Activated B cell treated with CpG ODN at 0.5 μM for 24 hours (primary cell): ENCODE measurements at regions of chr2 and their contacts with region 1.

Region 1: DNA sequence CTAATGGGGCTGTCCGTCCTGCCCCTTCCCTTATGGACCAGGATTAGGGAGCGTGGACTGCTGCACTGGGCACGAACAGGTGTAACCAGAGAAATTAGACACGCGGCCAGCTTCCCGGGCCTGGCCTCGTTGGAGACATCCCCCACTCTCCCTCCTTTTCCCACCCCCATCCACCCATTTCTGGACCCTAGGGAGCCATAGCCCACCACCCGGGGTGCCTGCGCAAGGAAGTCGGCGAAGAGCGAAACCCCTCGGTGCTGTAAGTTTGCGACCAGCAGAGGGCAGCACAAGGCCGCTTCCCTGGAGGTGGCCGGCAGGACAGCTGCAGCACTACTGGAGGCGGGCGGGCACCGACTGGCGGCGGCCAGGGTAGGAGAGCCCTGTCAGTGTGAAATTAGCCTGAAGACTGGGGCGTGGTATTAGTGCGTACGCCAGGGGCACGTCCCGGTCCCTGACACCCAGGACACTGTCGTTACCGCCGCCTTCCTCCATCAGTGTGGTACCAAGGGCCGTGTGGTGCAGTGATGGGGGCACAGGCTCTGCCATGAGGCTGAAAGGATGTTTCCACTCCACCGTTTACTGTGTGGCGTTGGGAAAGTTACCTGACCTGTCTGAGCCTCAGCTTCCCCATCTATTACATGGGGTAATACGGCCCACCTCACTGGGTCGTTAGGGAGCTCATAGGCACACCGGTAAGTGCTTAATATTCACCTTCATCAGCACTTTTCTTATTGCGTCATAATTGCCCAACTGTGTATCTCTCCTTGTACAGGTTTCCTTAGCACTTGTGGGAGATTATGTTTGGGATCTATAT is 36.0 kb upstream of the CD207 start:
- DNase-seq: peak; percentile 61
- ATAC-seq: peak; percentile 78
- H3K4me3 Mint-ChIP-seq: no peak overlapping the region
- H3K27ac Mint-ChIP-seq: no peak overlapping the region
- H3K4me1 Mint-ChIP-seq: peaks cover 6% of the 10 kb centered on the region
- H3K27me3 Mint-ChIP-seq: peaks cover 51% of the 10 kb centered on the region
- CTCF ChIP-seq: no peak

Region 2: DNA sequence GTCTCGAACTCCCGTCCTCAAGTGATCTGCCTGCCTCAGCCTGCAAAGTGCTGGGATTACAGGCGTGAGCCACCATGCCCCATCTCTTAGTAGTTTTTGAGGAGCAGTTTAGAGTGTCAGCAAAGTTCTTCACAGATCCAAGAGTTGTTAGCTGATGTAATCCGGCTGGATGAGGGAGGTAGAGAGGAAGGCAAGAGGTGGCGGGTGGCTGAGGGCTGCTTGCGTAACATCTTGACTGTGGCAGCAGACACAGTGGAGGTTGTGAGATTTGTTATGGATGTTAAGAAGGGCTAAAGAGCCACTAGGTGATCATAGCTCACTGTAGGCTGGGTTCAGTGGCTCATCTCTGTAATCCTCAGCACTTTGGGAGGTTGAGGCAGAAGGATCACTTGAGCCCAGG is 550.2 kb before region 1 on chr2:
- CTCF ChIA-PET with region 1: no interaction called
- POLR2A ChIA-PET with region 1: no interaction called
- intact Hi-C with region 1: no loop called
- DNase-seq: no peak
- ATAC-seq: no peak
- H3K4me3 Mint-ChIP-seq: no peak overlapping the region
- H3K27ac Mint-ChIP-seq: no peak overlapping the region
- H3K4me1 Mint-ChIP-seq: no peaks in the 10 kb centered on the region
- H3K27me3 Mint-ChIP-seq: peaks cover 31% of the 10 kb centered on the region
- CTCF ChIP-seq: no peak

Region 3: DNA sequence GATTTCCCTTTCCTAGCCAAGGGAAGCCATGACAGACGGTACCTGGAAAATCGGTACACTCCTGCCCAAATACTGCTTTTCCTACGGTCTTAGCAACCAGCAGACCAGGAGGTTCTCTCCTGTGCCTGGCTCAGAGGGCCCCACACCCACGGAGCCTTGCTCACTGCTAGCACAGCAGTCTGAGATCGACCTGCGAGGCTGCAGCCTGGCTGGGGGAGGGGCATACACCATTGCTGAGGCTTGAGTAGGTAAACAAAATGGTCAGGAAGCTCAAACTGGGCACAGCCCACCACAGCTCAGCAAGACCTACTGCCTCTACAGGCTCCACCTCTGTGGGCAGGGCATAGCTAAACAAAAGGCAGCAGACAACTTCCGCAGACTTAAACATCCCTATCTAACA is 29.2 kb before region 1 on chr2:
- CTCF ChIA-PET with region 1: no interaction called
- POLR2A ChIA-PET with region 1: no interaction called
- intact Hi-C with region 1: no loop called
- DNase-seq: no peak
- ATAC-seq: no peak
- H3K4me3 Mint-ChIP-seq: no peak overlapping the region
- H3K27ac Mint-ChIP-seq: no peak overlapping the region
- H3K4me1 Mint-ChIP-seq: no peaks in the 10 kb centered on the region
- H3K27me3 Mint-ChIP-seq: peaks cover 23% of the 10 kb centered on the region
- CTCF ChIP-seq: no peak

Region 4: DNA sequence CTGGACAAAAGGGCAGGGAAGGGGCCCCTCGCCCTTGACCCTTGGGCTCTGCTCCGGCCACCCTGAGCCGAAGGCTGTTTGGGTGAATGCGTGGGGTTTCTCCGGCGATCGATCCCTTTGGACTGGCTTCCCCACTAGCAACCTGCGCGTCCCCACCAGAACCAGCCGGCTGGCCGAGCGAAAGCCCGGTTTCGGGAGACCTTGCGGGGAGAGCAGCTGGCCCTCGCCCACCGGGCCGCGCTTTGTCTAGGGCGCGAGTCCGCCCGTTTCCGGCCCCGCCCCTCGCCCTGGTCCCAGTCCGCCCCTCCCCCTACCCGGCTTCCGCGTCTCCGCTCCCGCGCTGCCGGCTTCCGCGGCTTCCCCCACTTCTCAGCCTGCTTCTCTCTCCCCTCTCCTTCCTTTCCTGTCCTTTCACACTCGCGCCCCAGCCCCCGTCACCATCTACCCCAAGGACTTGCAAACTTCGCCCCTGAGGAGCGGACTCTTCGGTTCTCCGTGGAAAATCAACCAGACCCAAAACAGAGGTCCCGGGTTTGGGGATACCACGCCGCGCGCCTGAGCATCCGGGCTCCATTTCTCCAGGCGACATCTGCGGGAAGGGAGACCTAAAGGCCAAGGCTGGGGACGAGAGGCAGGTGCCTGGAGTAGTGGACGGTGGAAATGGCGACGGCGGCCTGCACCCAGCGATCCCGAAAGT is 16.1 kb after region 1 on chr2:
- CTCF ChIA-PET with region 1: no interaction called
- POLR2A ChIA-PET with region 1: no interaction called
- intact Hi-C with region 1: no loop called
- DNase-seq: no peak
- ATAC-seq: no peak
- H3K4me3 Mint-ChIP-seq: peak overlapping the region; percentile 76
- H3K27ac Mint-ChIP-seq: no peak overlapping the region
- H3K4me1 Mint-ChIP-seq: peaks cover 27% of the 10 kb centered on the region
- H3K27me3 Mint-ChIP-seq: peaks cover 67% of the 10 kb centered on the region
- CTCF ChIP-seq: no peak

Region 5: DNA sequence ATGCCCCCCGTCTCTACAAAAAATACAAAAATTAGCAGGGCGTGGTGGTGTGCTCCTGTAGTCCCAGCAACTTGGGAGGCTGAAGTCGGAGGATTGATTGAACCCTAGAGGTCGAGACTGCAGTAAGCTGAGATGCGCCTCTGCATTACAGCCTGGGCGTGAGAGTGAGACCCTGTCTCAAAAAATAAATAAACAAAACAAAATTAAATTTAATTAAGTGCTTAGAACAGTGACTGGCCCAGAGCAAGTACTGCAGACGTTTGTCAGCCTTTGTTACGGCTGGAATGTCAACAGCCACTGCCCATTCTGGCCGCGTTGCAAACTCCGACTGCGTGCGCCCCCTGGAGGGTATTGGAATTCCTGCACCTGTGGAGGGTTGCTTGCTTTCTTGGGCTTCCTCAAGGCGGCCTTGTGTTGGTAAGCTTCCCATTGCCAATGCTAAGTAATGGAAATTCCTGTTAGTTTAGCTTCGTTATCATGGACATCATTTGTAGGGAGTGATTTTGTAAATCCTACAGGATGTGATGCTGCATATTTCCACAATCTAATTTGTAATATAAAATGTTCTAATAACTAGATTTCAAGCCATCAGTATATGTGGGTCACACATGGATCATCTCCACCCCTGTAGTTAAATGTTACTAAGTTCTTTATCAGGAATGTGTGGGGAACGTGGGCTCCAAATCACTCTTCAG is 48.2 kb after region 1 on chr2:
- CTCF ChIA-PET with region 1: interaction called, 5 read pairs
- POLR2A ChIA-PET with region 1: no interaction called
- intact Hi-C with region 1: loop called (anchors 1 kb)
- DNase-seq: no peak
- ATAC-seq: peak; percentile 52
- H3K4me3 Mint-ChIP-seq: no peak overlapping the region
- H3K27ac Mint-ChIP-seq: no peak overlapping the region
- H3K4me1 Mint-ChIP-seq: no peaks in the 10 kb centered on the region
- H3K27me3 Mint-ChIP-seq: peaks cover 37% of the 10 kb centered on the region
- CTCF ChIP-seq: no peak

Region 6: GRCh38 chr2:70948337-70949003 is 76.9 kb after region 1 on chr2:
- CTCF ChIA-PET with region 1: interaction called, 62 read pairs
- POLR2A ChIA-PET with region 1: no interaction called
- intact Hi-C with region 1: loop called (anchors 1 kb)
- DNase-seq: peak; percentile 66
- ATAC-seq: peak; percentile 99
- H3K4me3 Mint-ChIP-seq: peak overlapping the region; percentile 77
- H3K27ac Mint-ChIP-seq: peak overlapping the region; percentile 4
- H3K4me1 Mint-ChIP-seq: peaks cover 12% of the 10 kb centered on the region
- H3K27me3 Mint-ChIP-seq: peaks cover 20% of the 10 kb centered on the region
- CTCF ChIP-seq: peak; percentile 73

Region 7: GRCh38 chr2:70977605-70978205 is 106.1 kb after region 1 on chr2:
- CTCF ChIA-PET with region 1: interaction called, 3 read pairs
- POLR2A ChIA-PET with region 1: no interaction called
- intact Hi-C with region 1: loop called (anchors 1 kb)
- DNase-seq: no peak
- ATAC-seq: peak; percentile 35
- H3K4me3 Mint-ChIP-seq: peak overlapping the region; percentile 92
- H3K27ac Mint-ChIP-seq: peak overlapping the region; percentile 87
- H3K4me1 Mint-ChIP-seq: peaks cover 16% of the 10 kb centered on the region
- H3K27me3 Mint-ChIP-seq: peaks cover 4% of the 10 kb centered on the region
- CTCF ChIP-seq: no peak

Region 8: DNA sequence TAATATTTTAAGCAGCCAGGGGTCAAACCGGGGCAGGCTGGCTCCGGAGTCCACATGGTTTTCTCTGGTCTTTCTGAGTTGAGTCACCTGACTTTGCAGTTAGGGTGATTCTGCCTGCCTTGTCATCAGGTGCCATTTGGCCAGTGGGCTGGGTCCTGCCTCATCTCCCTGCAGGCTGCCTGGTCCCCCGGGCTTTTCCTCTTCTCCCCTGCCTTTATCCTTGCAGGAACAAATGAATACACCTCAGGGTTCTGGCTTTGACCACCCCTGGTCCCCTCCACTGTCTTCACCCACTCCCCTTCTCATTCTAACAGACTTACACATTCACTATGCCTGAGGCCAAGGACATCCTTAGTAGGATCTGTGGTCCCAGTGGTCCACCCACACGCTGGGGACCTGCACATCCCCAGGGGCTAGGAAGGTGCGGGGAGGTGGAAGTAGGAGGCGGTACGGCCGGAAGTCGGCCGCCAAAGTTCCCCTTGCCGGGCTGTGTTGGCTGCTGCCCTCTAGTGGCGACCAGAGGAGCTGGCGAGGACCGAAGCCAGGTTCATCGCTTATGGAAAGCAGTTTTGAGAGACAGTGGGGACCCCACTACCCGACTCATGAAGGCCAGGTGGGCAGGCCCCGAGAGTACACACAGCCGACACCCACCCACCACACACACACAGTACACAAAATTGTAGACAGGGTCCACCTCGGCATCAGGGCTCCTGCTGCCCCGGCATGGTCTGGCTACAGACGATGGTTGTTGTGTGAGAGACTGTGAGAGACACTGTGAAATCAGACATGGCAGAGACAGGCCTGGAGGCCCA is 129.4 kb after region 1 on chr2:
- CTCF ChIA-PET with region 1: interaction called, 7 read pairs
- POLR2A ChIA-PET with region 1: no interaction called
- intact Hi-C with region 1: loop called (anchors 5 kb)
- DNase-seq: peak; percentile 71
- ATAC-seq: peak; percentile 98
- H3K4me3 Mint-ChIP-seq: peak overlapping the region; percentile 77
- H3K27ac Mint-ChIP-seq: peak overlapping the region; percentile 53
- H3K4me1 Mint-ChIP-seq: peaks cover 10% of the 10 kb centered on the region
- H3K27me3 Mint-ChIP-seq: peaks cover 11% of the 10 kb centered on the region
- CTCF ChIP-seq: peak; percentile 51

Region 9: DNA sequence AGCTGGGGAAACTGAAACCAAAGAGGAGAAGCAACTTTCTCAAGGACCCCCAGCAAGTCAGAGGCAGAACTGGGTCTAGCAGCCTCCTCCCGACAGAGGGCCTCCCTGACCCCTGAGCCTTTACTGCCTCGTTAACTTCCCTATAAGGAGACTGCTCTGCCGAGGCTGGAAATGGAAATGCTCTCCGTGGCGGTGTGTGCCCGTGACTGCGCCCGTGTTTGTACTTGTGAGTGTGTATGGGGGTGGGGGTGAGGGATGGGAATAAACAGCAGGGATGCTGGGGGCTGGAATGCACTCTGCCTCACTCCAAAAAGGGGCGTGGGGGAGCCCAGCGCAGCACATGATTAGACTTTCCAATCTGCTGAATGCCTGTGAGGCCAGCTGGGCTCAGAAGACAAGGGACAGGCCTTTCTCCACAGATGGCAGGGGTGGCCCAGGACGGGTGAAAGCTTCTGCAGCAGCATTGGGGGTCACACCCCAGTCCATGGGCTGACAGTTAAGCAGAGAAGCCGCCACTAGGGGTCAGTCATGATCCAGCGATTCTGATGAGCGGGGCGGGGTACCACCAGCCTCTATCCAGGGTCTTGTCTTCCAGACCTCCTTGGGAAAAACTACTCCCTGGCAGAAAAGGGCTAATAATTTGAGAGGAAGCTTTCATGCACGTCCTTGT is 285.7 kb after region 1 on chr2:
- CTCF ChIA-PET with region 1: no interaction called
- POLR2A ChIA-PET with region 1: no interaction called
- intact Hi-C with region 1: no loop called
- DNase-seq: peak; percentile 41
- ATAC-seq: peak; percentile 68
- H3K4me3 Mint-ChIP-seq: no peak overlapping the region
- H3K27ac Mint-ChIP-seq: no peak overlapping the region
- H3K4me1 Mint-ChIP-seq: peaks cover 4% of the 10 kb centered on the region
- H3K27me3 Mint-ChIP-seq: peaks cover 10% of the 10 kb centered on the region
- CTCF ChIP-seq: no peak